H1 (cell line): ENCODE measurements at regions of chr1 and their contacts with region 1.

Region 1: GRCh38 chr1:63917571-63918417 is 144.0 kb downstream of the ROR1 start:
- DNase-seq: peak; percentile 36 to 86
- H3K4me3 ChIP-seq: no peak overlapping the region
- H3K27ac ChIP-seq: no peak overlapping the region
- H3K4me1 ChIP-seq: peaks cover 11 to 42% (median 27%) of the 10 kb centered on the region in 4 experiments; a peak in 6 of 7 replicates
- H3K27me3 ChIP-seq: no peaks in the 10 kb centered on the region
- CTCF ChIP-seq: peak; percentile 62 to 86 (median 81)
- EP300 ChIP-seq: no peak
- POLR2A ChIP-seq: no peak
- RAD21 ChIP-seq: peak; percentile 52 to 66

Region 2: DNA sequence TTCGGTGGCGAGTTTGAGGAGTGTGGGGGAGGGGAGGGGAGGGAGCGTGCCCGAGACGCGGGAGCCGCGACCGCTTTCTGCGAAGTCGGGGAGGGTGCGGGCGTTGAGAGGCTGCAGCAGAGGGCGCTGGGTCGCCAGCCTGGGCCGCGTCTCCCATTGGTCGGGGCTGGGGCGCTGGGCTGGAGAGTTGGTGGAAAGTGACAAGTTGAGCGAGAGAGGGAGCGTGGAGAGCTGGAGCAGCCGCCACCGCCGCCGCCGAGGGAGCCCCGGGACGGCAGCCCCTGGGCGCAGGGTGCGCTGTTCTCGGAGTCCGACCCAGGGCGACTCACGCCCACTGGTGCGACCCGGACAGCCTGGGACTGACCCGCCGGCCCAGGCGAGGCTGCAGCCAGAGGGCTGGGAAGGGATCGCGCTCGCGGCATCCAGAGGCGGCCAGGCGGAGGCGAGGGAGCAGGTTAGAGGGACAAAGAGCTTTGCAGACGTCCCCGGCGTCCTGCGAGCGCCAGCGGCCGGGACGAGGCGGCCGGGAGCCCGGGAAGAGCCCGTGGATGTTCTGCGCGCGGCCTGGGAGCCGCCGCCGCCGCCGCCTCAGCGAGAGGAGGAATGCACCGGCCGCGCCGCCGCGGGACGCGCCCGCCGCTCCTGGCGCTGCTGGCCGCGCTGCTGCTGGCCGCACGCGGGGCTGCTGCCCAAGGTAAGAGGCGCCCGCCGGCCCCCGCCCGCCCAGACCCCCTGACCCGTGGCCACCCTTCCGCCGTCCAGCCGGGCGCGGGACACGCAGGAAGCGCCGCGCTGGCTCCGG is 143.8 kb before region 1 on chr1 and contains the start of gene ROR1:
- CTCF ChIA-PET with region 1: interaction called, 24 read pairs
- POLR2A ChIA-PET with region 1: interaction called, 13 read pairs
- DNase-seq: peak; percentile 60 to 91
- H3K4me3 ChIP-seq: peak within 1 kb of the TSS; percentile 79 to 89 (median 82)
- H3K27ac ChIP-seq: peak within 1 kb of the TSS; percentile 68; the same call in 1 of the 2 replicates
- H3K4me1 ChIP-seq: peaks cover 16 to 35% (median 21%) of the 10 kb centered on the region in 4 experiments; a peak in 6 of 7 replicates
- H3K27me3 ChIP-seq: no peaks in the 10 kb centered on the region
- CTCF ChIP-seq: peak; percentile 72 to 76 (median 72)
- EP300 ChIP-seq: peak in 1 of 2 experiments; percentile 20; a peak in 1 of 3 replicates
- POLR2A ChIP-seq: no peak; a peak in 1 of 3 replicates
- RAD21 ChIP-seq: peak; percentile 77 to 79
- total RNA-seq, gene ROR1: 70.3 and 73.6 TPM in 2 replicates

Region 3: DNA sequence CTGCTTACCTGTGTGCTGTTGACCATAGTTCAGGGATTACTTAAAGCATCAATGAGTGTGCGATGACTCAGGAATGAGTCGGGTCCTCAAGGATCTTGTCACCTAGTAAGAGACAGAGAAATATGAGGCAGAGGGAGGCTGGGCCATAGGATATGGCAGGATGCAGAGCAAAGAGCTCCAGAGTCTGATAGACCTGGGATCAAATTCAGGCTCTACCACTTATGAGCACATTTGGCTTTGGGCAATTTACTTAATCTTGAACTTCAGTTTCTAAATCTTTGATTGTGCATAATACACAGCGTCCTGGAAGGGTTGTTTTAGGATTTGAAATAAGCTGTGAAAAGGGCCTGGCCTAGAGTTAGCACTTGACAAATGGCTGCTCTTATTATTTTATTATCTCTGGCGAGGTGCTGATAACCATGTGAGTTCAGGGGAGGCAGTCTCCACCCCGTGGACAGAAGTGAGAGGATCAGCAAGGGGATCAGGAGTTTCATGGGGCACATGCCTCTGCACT is 49.5 kb before region 1 on chr1:
- CTCF ChIA-PET with region 1: interaction called, 52 read pairs
- POLR2A ChIA-PET with region 1: no interaction called
- DNase-seq: no peak
- H3K4me3 ChIP-seq: no peak overlapping the region
- H3K27ac ChIP-seq: no peak overlapping the region
- H3K4me1 ChIP-seq: peaks cover 0 to 17% (median 9%) of the 10 kb centered on the region in 4 experiments; a peak in 4 of 7 replicates
- H3K27me3 ChIP-seq: no peaks in the 10 kb centered on the region
- CTCF ChIP-seq: 0 out of 4 replicates have a peak, but pooled peaks of 1 of the 3 experiments have one; percentile 14
- EP300 ChIP-seq: no peak
- POLR2A ChIP-seq: no peak
- RAD21 ChIP-seq: peak; percentile 24 to 41

Region 4: DNA sequence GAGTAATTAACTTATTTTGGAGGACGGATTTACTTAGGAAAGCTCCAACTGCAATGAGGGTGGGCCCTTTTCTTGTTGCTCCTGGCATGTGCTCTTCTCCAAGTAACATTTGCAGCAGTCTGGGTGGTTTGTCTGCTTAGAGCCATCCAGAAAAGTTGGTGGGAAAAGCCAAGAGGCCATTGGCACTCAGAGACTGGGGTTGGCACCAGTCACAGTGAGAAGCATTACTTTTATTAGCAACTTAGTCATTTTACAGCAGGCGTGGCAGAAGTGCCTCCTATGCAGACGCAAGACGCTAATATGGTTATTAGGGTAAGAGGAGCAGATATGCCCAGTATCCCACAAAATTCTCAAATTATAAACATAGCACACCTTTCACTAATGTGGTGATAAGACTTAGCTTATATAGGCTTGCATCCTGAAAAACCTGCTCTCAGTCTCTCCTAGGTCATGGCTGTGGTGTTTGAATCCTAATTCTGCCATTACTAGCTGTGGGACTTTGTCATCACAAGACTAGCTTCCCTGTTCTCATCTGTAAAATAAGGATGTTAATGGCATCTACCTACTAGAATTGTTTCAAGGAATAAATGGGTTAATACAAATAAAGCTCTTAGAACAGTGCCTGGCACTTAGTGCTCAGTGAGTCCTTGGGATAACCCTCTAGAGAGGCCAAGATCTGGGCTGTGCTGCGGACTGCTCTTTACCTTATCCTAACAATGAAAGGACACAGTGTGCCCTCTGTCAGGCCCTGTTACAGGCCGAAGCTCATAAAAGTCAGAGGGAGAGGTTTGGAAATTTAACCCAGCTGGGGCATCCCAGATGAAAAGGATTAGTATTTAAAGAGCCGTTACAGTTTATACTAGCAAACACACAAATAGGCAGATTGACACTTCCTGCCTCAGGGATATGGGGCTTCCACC is 10.7 kb after region 1 on chr1:
- CTCF ChIA-PET with region 1: interaction called, 34 read pairs
- POLR2A ChIA-PET with region 1: no interaction called
- DNase-seq: no peak
- H3K4me3 ChIP-seq: no peak overlapping the region
- H3K27ac ChIP-seq: no peak overlapping the region
- H3K4me1 ChIP-seq: peaks cover 0 to 18% (median 4%) of the 10 kb centered on the region in 4 experiments; a peak in 4 of 7 replicates
- H3K27me3 ChIP-seq: no peaks in the 10 kb centered on the region
- CTCF ChIP-seq: no peak
- EP300 ChIP-seq: no peak
- POLR2A ChIP-seq: no peak
- RAD21 ChIP-seq: no peak

Region 5: DNA sequence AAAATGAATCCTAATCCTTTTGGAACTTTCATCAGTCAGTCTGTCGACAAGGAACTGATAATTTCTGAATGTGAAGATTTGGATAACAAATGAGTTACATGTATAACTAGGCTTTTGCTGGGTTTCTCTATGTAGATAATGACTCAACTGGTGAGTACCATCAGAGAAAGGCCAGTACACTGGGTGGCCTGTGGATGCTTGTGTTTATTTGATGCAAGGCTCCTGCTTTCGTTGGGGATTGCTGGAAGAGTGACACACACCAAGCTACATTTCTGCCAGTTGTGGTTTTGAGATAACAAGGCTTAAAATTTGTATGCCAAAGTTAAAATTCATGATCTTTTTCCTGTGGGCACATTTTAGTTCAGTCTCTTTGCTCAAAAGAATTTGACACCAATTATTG is 170.0 kb after region 1 on chr1:
- CTCF ChIA-PET with region 1: no interaction called
- POLR2A ChIA-PET with region 1: no interaction called
- DNase-seq: no peak
- H3K4me3 ChIP-seq: no peak overlapping the region
- H3K27ac ChIP-seq: no peak overlapping the region
- H3K4me1 ChIP-seq: peaks cover 0 to 3% (median under 1%) of the 10 kb centered on the region in 4 experiments; a peak in 3 of 7 replicates
- H3K27me3 ChIP-seq: no peaks in the 10 kb centered on the region
- CTCF ChIP-seq: no peak
- EP300 ChIP-seq: no peak
- POLR2A ChIP-seq: no peak
- RAD21 ChIP-seq: no peak

Region 6: DNA sequence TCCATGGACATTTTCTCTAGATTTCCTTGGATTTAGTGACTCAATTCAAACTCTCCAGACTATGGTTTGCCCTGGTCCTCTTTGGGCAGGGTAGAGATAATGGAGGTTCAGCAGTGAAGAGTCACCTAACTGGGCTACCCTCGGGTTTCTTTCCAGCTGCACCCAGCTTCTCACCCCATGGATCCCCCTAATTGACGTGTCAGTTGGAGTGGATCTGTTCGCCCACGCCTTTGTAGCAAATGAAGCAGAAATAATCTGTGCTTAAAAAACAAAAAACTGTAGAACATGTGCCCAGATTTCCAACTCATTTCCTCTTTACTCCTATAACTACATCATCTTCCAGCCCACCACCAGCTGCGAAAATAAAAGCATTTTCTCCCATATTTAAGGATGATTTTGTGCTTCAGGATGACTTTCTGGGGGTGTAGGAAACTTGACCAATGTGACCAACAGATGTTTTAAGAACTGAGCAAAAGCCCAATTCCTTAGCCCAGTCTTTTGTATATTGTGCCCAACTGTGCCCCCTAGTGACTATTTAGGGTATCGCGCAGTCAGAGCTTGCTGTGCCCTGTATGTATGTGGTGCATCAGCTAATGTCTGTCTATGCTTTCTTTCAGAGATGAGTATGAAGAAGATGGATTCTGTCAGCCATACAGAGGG is 219.1 kb after region 1 on chr1:
- CTCF ChIA-PET with region 1: interaction called, 56 read pairs
- POLR2A ChIA-PET with region 1: interaction called, 3 read pairs
- DNase-seq: peak; percentile 49 to 93
- H3K4me3 ChIP-seq: no peak overlapping the region
- H3K27ac ChIP-seq: no peak overlapping the region
- H3K4me1 ChIP-seq: no peaks in the 10 kb centered on the region
- H3K27me3 ChIP-seq: no peaks in the 10 kb centered on the region
- CTCF ChIP-seq: peak; percentile 57 to 92 (median 72)
- EP300 ChIP-seq: no peak
- POLR2A ChIP-seq: no peak
- RAD21 ChIP-seq: peak; percentile 87 to 90